Activated naive CD4-positive, alpha-beta T cell treated with anti-CD3 and anti-CD28 coated beads for 36 hours (primary cell): ENCODE measurements at regions of chr11 and their contacts with region 1.

Region 1: DNA sequence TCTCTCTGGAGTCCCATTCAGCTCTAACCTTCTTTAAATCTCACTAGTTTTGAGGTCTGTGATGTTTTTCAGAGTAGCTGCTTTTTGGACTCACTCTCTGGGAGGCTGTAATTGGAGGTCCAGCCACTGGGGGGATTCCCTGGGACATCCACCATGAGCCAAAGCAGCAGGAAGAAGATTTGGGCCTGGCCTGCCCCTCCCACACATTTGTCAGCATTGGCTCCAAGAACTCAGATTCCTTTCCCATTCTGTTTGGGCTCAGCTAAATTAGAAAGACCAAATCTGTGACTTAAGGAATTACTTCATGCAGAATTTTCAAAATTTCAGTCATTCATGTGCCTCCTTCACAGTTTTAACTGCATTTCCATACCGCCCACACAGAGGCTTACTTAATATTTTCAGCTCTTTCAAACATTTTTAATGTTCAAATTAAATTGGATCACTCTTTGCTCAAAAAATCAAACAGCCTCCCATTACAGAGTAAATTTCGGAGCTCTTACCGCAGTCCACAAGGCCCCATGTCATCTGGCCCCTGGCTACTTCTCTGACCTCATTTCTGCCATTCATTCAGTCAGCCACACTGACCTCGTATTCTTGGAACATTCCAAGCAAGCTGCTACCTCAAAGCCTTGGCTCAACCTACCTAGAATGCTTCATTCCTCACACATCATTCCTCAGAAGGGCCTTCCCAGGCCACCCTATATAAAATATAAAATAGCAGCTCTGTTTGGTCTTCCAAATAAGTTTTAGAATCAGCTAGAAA is 54.5 kb upstream of the RRAS2 start:
- DNase-seq: peak; percentile 41
- H3K4me3 Mint-ChIP-seq: no peak overlapping the region
- H3K27ac Mint-ChIP-seq: peak overlapping the region; percentile 20
- H3K4me1 Mint-ChIP-seq: peaks cover 36% of the 10 kb centered on the region
- H3K27me3 Mint-ChIP-seq: no peaks in the 10 kb centered on the region

Region 2: GRCh38 chr11:13850231-13851005 is 563.1 kb before region 1 on chr11:
- CTCF ChIA-PET with region 1: no interaction called
- intact Hi-C with region 1: no loop called
- DNase-seq: no peak
- H3K4me3 Mint-ChIP-seq: no peak overlapping the region
- H3K27ac Mint-ChIP-seq: no peak overlapping the region
- H3K4me1 Mint-ChIP-seq: peaks cover 12% of the 10 kb centered on the region
- H3K27me3 Mint-ChIP-seq: no peaks in the 10 kb centered on the region

Region 3: DNA sequence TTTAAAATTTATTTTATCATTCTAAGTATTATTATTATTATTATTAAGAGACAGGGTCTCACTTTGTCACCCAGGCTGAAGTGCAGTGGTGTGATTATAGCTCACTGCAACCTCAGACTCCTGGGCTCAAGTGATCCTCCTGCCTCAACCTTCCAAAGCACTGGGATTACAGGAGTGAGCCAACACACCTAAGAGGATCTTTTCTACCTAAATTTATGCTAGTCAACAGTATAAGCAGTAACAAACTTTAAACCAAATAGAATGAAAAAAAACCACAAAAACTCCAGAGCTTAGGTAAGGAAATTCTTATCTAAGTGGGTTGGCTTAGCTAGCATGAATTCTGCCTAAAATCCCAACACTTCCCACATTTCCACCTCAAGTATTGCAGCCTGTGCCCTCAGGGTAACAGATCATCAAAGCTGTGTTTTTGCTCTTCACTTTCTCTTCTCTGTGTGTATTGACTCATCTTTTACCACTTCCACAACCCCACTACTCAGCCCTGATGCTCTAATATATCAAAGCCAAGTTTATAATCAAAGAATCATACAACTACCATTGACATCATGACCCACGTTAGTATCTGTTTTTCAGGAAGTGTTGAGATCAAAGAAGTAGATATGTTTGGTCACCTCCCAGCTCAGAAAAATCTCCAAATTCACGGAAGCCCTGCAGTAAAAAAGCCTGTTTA is 544.6 kb before region 1 on chr11:
- CTCF ChIA-PET with region 1: no interaction called
- intact Hi-C with region 1: loop called (anchors 1 kb)
- DNase-seq: peak; percentile 61
- H3K4me3 Mint-ChIP-seq: peak overlapping the region; percentile 42
- H3K27ac Mint-ChIP-seq: peak overlapping the region; percentile 91
- H3K4me1 Mint-ChIP-seq: peaks cover 41% of the 10 kb centered on the region
- H3K27me3 Mint-ChIP-seq: no peaks in the 10 kb centered on the region

Region 4: GRCh38 chr11:14258221-14258935 is 155.1 kb before region 1 on chr11:
- CTCF ChIA-PET with region 1: interaction called, 4 read pairs
- intact Hi-C with region 1: loop called (anchors 5 kb)
- DNase-seq: no peak
- H3K4me3 Mint-ChIP-seq: no peak overlapping the region
- H3K27ac Mint-ChIP-seq: no peak overlapping the region
- H3K4me1 Mint-ChIP-seq: no peaks in the 10 kb centered on the region
- H3K27me3 Mint-ChIP-seq: no peaks in the 10 kb centered on the region

Region 5: GRCh38 chr11:14358729-14359439 is 54.6 kb before region 1 on chr11 and contains the start of gene RRAS2:
- CTCF ChIA-PET with region 1: no interaction called
- intact Hi-C with region 1: loop called (anchors 1 kb)
- DNase-seq: peak; percentile 77
- H3K4me3 Mint-ChIP-seq: peak within 1 kb of the TSS; percentile 92
- H3K27ac Mint-ChIP-seq: peak within 1 kb of the TSS; percentile 68
- H3K4me1 Mint-ChIP-seq: peaks cover 26% of the 10 kb centered on the region
- H3K27me3 Mint-ChIP-seq: no peaks in the 10 kb centered on the region
- total RNA-seq, gene RRAS2: 36.6 to 36.8 TPM

Region 6: DNA sequence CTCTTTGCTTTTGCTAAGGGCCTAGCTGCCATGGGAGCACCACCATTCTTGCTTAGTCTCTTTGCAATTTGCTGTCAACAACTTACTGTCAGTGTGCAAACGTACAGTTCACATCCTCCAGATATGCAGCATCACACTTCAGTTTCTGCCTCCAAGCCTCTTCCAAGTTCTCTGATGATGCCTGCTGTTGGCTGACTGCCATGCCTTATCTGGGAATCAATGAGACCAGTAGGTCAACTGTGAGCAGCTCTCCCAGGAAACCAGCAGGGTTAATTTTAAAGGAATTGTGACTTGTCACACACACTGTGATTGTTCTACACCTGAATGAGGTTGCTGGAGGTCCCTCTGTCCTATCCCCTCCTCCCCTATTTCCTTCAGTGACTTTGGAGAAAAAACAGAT is 30.1 kb after region 1 on chr11:
- CTCF ChIA-PET with region 1: interaction called, 3 read pairs
- intact Hi-C with region 1: loop called (anchors 2 kb)
- DNase-seq: no peak
- H3K4me3 Mint-ChIP-seq: no peak overlapping the region
- H3K27ac Mint-ChIP-seq: no peak overlapping the region
- H3K4me1 Mint-ChIP-seq: peaks cover 46% of the 10 kb centered on the region
- H3K27me3 Mint-ChIP-seq: no peaks in the 10 kb centered on the region

Region 7: DNA sequence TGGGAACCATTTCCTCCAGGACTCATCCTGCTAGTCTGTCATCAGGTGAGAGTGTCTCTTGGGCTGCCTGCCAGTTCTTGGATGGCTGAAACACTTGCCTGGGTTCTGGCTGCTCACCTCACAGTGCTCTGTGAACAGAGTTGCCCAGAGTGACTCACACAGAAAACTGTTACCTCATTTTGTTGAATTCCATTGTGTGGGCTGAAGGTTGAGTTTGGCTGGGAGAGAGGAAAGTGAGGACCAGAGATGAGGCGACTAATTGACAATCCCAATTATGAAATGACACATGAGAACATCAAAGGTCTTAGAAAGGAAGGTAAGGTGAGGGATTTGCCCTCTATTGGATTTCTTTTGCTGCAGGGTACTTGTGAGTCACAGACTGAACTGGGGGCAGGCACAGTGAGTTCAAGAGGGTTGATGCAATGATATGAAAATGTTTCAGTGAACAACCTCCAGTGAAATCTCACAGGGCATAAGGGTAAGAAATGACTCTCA is 639.8 kb after region 1 on chr11:
- CTCF ChIA-PET with region 1: no interaction called
- intact Hi-C with region 1: loop called (anchors 10 kb)
- DNase-seq: peak; percentile 75
- H3K4me3 Mint-ChIP-seq: no peak overlapping the region
- H3K27ac Mint-ChIP-seq: peak overlapping the region; percentile 83
- H3K4me1 Mint-ChIP-seq: peaks cover 26% of the 10 kb centered on the region
- H3K27me3 Mint-ChIP-seq: peaks cover 2% of the 10 kb centered on the region